ENCODE measurements at regions of chr11 and their contacts with region 1.

Region 1: GRCh38 chr11:65314501-65315203 is at the start of gene CDC42EP2:
- DNase-seq: peak; percentile 42 to 87 (median 56)
- ATAC-seq: peak; percentile 94
- H3K4me3 ChIP-seq: peak within 1 kb of the TSS; percentile 68
- H3K4me3 Mint-ChIP-seq: peak within 1 kb of the TSS; percentile 47 to 86 (median 76)
- H3K27ac ChIP-seq: peak within 1 kb of the TSS; percentile 59
- H3K27ac Mint-ChIP-seq: peak within 1 kb of the TSS in 3 of 9 donors; percentile 32 to 40 (median 38)
- H3K4me1 ChIP-seq: peaks cover 0 to 11% of the 10 kb centered on the region in 2 donors
- H3K4me1 Mint-ChIP-seq: peaks cover 0 to 13% (median 5%) of the 10 kb centered on the region in 7 donors
- H3K27me3 ChIP-seq: no peaks in the 10 kb centered on the region
- H3K27me3 Mint-ChIP-seq: peaks cover 0 to 12% (median 0%) of the 10 kb centered on the region in 5 donors
- total RNA-seq, gene CDC42EP2: 0.58 to 1.8 (median 0.89) TPM

Region 2: GRCh38 chr11:65204646-65205601 is 109.7 kb before region 1 on chr11:
- CTCF ChIA-PET with region 1: interaction called, 5 read pairs
- POLR2A ChIA-PET with region 1: no interaction called
- intact Hi-C with region 1: loop called in 1 of 2 experiments (anchors 1 kb)
- DNase-seq: peak in 8 of 9 donors; percentile 33 to 71 (median 52)
- ATAC-seq: peak; percentile 75
- H3K4me3 ChIP-seq: no peak overlapping the region
- H3K4me3 Mint-ChIP-seq: no peak overlapping the region
- H3K27ac ChIP-seq: no peak overlapping the region
- H3K27ac Mint-ChIP-seq: peak overlapping the region in 2 of 9 donors; percentile 30 to 65
- H3K4me1 ChIP-seq: no peaks in the 10 kb centered on the region
- H3K4me1 Mint-ChIP-seq: peaks cover 0 to 13% (median 5%) of the 10 kb centered on the region in 7 donors
- H3K27me3 ChIP-seq: no peaks in the 10 kb centered on the region
- H3K27me3 Mint-ChIP-seq: no peaks in the 10 kb centered on the region

Region 3: DNA sequence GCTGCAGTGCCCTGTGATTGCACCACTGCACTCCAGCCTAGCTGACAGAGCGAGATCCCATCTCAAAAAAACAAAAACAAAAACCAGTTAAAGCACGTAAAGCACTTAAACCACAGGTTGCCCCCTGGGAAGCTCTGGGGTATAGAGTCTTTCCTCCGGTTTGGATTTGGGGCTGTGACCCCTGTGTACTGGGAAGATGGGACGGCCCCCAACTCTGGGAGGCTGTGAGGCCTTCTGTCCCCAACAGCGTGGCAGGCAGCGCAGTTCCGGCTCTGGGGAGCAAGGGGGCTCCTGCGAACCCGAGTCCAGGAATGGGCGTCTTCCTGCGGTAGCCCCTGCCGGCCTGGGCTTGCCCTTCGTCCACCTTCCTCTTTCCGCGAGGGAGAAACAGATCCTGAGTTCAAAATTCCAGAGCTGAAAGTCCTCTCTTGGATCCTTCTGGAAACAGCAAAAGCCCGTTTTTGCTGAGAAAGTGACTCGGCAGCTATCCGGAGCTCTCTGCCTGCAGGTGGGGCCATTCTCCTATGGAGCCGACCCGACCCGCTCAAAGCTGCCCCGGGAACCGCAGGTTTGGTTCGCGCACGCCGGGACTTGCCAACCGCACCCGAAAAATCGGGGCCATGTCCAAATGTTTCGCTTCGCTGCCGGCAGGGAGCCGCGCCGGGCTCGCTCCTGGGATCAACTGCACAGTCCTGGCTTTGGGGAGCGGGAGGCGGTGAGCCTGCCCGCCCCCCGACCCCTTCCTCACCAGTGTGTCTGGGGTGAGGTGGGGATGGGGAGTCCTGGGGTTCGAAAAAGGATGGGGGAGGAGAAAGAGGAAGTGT is 89.2 kb before region 1 on chr11:
- CTCF ChIA-PET with region 1: interaction called, 54 read pairs
- POLR2A ChIA-PET with region 1: interaction called, 5 read pairs
- intact Hi-C with region 1: loop called (anchors 1 kb)
- DNase-seq: peak; percentile 26 to 67 (median 56)
- ATAC-seq: peak; percentile 82
- H3K4me3 ChIP-seq: peak overlapping the region; percentile 48
- H3K4me3 Mint-ChIP-seq: peak overlapping the region; percentile 76 to 86 (median 79)
- H3K27ac ChIP-seq: no peak overlapping the region
- H3K27ac Mint-ChIP-seq: no peak overlapping the region
- H3K4me1 ChIP-seq: peaks cover 0 to 5% of the 10 kb centered on the region in 2 donors
- H3K4me1 Mint-ChIP-seq: peaks cover 6 to 15% (median 8%) of the 10 kb centered on the region in 7 donors
- H3K27me3 ChIP-seq: peaks cover 0 to 3% of the 10 kb centered on the region in 2 donors
- H3K27me3 Mint-ChIP-seq: peaks cover 12 to 39% (median 18%) of the 10 kb centered on the region in 5 donors

Region 4: GRCh38 chr11:65261591-65262380 is 52.9 kb before region 1 on chr11 and contains the start of gene POLA2:
- CTCF ChIA-PET with region 1: interaction called, 5 read pairs
- POLR2A ChIA-PET with region 1: interaction called, 4 read pairs
- intact Hi-C with region 1: loop called in 1 of 2 experiments (anchors 1 kb)
- DNase-seq: peak; percentile 94 to 99 (median 98)
- ATAC-seq: peak; percentile 96
- H3K4me3 ChIP-seq: peak within 1 kb of the TSS; percentile 88
- H3K4me3 Mint-ChIP-seq: peak within 1 kb of the TSS; percentile 83 to 95 (median 92)
- H3K27ac ChIP-seq: peak within 1 kb of the TSS; percentile 88
- H3K27ac Mint-ChIP-seq: peak within 1 kb of the TSS; percentile 91 to 98 (median 97)
- H3K4me1 ChIP-seq: peaks cover 9 to 18% of the 10 kb centered on the region in 2 donors
- H3K4me1 Mint-ChIP-seq: peaks cover 20 to 62% (median 50%) of the 10 kb centered on the region in 7 donors
- H3K27me3 ChIP-seq: no peaks in the 10 kb centered on the region
- H3K27me3 Mint-ChIP-seq: peaks cover 0 to 2% (median 0%) of the 10 kb centered on the region in 5 donors
- total RNA-seq, gene POLA2: 13.4 to 51.6 (median 27.8) TPM

Region 5: DNA sequence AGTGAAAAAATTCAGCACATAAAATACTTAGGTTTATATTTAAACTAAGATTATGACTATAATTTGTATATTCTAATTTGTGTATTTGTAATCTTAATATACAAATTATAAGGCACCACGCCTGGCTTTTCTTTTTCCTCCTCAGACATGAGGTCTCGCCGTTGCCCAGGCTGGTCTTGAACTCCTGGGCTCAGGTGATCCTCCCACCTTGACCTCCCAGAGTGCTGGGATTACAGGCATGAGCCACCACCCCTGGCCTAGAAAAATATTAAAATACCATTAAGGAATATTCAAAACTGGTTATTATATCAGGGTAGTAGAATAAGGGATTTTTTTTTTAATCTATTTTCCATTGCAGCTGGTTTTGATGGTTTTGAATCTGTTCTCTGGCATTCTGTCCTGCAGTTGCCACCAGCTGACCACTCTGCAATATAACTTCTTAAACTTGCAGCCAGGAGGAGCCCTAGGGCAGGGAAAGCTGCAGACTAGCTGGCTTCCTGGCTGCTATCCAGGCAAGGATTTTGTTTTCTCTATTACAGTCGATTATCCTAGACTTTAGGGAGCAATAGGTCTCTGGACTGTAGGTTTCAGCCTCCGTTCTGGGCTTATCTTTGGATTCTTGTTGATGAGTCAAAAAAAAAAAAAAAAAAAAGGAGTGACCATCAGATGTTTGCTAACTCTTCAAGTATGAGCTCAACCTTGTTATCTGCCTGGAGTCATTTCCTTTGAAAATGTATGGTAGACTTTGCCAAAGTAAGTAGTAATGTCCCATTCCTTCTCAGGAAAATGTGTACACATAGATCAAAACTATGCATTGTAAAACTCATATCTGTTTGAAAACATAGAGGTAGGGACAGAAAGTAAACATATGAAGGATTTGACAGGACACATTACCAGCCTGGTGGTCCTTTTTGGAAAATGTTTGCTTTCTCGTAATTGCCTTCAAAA is 39.6 kb before region 1 on chr11:
- CTCF ChIA-PET with region 1: interaction called, 16 read pairs
- POLR2A ChIA-PET with region 1: interaction called, 3 read pairs
- intact Hi-C with region 1: loop called (anchors 1 kb)
- DNase-seq: peak in 5 of 9 donors; percentile 22 to 31 (median 24)
- ATAC-seq: peak; percentile 78
- H3K4me3 ChIP-seq: no peak overlapping the region
- H3K4me3 Mint-ChIP-seq: no peak overlapping the region
- H3K27ac ChIP-seq: no peak overlapping the region
- H3K27ac Mint-ChIP-seq: no peak overlapping the region
- H3K4me1 ChIP-seq: no peaks in the 10 kb centered on the region
- H3K4me1 Mint-ChIP-seq: peaks cover 0 to 21% (median 4%) of the 10 kb centered on the region in 7 donors
- H3K27me3 ChIP-seq: no peaks in the 10 kb centered on the region
- H3K27me3 Mint-ChIP-seq: no peaks in the 10 kb centered on the region

Measured in naive thymus-derived CD4-positive, alpha-beta T cell (primary cell).